Left lung (tissue), 14 donors: ENCODE measurements at regions of chr9 and their contacts with region 1.

Region 1: DNA sequence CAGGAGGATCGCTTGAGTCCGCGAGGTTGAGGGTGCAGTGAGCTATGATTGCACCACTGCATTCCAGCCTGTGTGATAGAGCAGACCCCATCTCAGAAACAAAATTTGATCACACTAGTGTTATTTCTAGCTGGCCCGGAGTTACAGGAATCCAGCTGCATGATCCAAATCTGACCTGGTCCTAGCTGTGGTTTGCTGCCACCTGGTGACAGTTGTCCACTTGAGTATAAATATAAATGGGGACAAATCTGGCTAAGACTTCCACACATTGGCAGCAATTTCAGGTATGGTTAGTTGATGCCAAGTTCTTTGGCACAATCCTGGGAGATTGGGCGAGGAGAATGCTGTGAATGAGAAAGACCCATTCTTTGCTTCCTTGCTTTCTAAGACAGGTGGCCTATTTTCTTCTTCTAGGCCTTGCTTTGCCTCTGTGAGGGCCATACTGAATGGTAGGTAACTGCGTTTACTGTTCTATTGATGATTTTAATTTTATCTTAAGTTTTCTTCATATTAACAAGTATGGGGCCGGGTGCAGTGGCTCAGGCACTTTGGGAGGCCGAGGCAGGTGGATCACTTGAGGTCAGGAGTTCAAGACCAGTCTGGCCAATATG is 35.4 kb downstream of the UBE2R2 start:
- DNase-seq: peak in 3 of 4 donors; percentile 29 to 62 (median 59)
- ATAC-seq: peak; percentile 87
- H3K4me3 ChIP-seq: no peak overlapping the region
- H3K27ac ChIP-seq: no peak overlapping the region
- H3K4me1 ChIP-seq: peaks cover 16 to 69% of the 10 kb centered on the region in 2 donors
- H3K27me3 ChIP-seq: no peaks in the 10 kb centered on the region
- CTCF ChIP-seq: peak; percentile 21 to 59

Region 2: GRCh38 chr9:33813712-33814641 is 38.3 kb before region 1 on chr9:
- intact Hi-C with region 1: loop called in 1 of 2 experiments (anchors 5 kb)
- DNase-seq: peak in 1 of 4 donors; percentile 40
- ATAC-seq: no peak
- H3K4me3 ChIP-seq: no peak overlapping the region
- H3K27ac ChIP-seq: peak overlapping the region; percentile 42 to 100
- H3K4me1 ChIP-seq: peaks cover 4 to 38% of the 10 kb centered on the region in 2 donors
- H3K27me3 ChIP-seq: no peaks in the 10 kb centered on the region
- CTCF ChIP-seq: peak; percentile 42 to 72

Region 3: GRCh38 chr9:34001298-34001697 is 149.0 kb after region 1 on chr9:
- intact Hi-C with region 1: no loop called
- DNase-seq: no peak
- ATAC-seq: peak; percentile 39
- H3K4me3 ChIP-seq: no peak overlapping the region
- H3K27ac ChIP-seq: no peak overlapping the region
- H3K4me1 ChIP-seq: no peaks in the 10 kb centered on the region
- H3K27me3 ChIP-seq: no peaks in the 10 kb centered on the region
- CTCF ChIP-seq: no peak